Endothelial cell of umbilical vein (primary cell): ENCODE measurements at regions of chr10 and their contacts with region 1.

Region 1: DNA sequence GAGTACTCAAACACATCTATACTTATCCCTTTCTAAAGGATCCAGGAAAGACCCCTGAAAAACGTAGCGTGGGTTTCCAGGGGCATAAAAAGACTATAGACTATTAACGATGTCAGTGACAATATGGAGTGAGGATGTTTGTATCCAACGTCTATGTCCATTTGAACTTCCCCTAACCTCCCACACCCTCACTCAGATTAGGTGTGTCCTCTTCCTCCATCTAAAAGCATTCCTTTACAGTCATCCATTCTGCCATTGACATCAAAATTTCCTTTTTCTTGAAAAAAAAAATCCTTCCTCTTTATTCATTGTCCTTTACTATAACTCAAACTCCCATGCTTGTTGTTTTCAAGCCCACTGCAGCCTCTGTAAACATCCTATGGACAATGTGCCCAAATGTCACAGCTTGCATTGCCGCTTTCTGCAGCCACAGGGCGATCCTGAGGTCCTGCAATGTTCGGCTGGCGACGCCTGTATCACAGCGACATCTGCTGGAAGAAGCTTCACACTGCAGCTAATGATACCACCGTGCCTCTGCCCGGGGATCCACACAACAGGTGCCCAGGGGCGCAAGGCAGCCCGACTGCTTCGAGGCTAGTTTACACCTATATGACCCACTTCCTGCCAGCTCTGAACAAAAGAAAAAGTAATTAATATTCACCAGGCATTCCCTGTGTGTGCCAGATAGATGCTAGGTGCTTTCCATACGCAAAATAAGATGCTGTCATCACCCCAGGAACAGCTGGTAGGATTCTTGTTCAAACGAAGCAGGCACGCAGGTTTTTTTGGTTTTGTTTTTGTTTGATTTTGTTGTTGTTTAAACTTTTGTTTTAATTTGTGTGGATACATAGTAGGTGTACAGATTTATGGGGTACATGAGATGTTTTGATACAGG is 267.9 kb upstream of the GHITM start:
- DNase-seq: peak; percentile 69
- H3K4me3 ChIP-seq: no peak overlapping the region
- H3K27ac ChIP-seq: no peak overlapping the region
- H3K4me1 ChIP-seq: no peaks in the 10 kb centered on the region
- H3K27me3 ChIP-seq: no peaks in the 10 kb centered on the region
- CTCF ChIP-seq: peak; percentile 86 to 92
- POLR2A ChIP-seq: no peak

Region 2: DNA sequence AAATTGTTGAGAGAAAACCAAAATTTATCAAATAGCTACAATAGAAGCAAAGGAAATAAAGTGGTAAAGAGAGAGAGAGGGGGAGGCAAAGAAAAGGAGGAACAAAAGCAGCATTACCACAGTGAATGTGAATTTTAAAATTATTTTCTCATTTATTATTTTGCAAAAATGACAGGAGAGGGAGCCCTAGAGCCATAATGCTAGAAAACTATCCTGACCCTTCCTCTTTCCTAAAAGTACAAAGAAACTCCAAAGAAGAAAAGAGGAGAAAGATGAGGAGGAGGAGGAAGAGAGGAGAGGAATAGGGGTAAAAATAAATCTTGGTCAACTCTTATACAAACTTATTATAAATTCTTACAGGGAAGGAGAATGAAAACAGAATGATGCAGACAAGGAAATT is 1074.9 kb before region 1 on chr10:
- CTCF ChIA-PET with region 1: interaction called, 114 read pairs
- POLR2A ChIA-PET with region 1: no interaction called
- dilution Hi-C with region 1: no loop called
- intact Hi-C with region 1: loop called (anchors 1 kb)
- DNase-seq: peak; percentile 6
- H3K4me3 ChIP-seq: no peak overlapping the region
- H3K27ac ChIP-seq: no peak overlapping the region
- H3K4me1 ChIP-seq: no peaks in the 10 kb centered on the region
- H3K27me3 ChIP-seq: no peaks in the 10 kb centered on the region
- CTCF ChIP-seq: peak in 1 of 2 donors; percentile 18
- POLR2A ChIP-seq: no peak

Region 3: DNA sequence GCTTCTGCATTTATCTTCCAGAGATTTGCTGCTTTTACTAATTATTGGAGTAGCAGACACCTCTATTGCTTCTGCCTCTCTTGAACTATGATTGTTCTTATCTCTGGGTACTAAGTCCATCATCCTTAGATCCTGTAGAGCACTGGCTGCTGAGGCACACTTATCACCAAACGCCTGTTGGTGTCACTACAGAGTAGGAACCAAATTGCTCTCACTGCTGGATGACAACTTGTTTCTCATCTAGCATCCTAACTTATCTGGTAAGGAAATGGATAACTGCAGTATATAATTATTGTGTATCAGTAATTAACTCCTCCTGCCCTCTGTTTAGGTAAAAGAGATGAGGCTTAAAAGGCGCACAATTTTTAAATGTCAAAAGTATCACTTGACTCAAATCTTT is 937.0 kb before region 1 on chr10:
- CTCF ChIA-PET with region 1: interaction called, 9 read pairs
- POLR2A ChIA-PET with region 1: no interaction called
- dilution Hi-C with region 1: no loop called
- intact Hi-C with region 1: loop called (anchors 1 kb)
- DNase-seq: peak; percentile 19
- H3K4me3 ChIP-seq: no peak overlapping the region
- H3K27ac ChIP-seq: no peak overlapping the region
- H3K4me1 ChIP-seq: no peaks in the 10 kb centered on the region
- H3K27me3 ChIP-seq: no peaks in the 10 kb centered on the region
- CTCF ChIP-seq: peak; percentile 5 to 24
- POLR2A ChIP-seq: no peak

Region 4: DNA sequence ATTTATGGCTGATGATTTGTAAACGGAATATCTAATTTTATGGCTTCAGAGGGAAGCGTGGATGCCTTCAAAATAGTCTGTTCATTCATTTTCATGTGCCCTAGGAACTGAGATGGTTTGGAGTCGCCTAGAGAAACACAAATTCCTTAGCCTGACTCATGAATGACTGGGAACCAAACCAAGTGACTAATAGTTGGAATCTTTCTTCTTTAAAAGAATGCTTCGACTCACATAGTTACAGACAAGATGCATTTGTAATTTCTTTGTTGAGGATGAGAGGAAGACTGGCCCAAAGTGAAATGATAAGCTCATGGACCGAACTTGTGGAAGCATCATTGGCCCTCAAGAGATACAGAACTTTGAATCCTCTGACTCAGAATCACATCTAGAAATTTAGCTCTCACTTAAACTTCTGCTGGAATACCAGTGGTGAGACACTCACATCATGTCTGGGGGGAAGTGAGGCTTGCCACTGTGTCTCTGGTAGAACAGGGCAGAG is 889.3 kb before region 1 on chr10:
- CTCF ChIA-PET with region 1: interaction called, 10 read pairs
- POLR2A ChIA-PET with region 1: no interaction called
- dilution Hi-C with region 1: no loop called
- intact Hi-C with region 1: loop called (anchors 2 kb)
- DNase-seq: peak; percentile 88
- H3K4me3 ChIP-seq: no peak overlapping the region
- H3K27ac ChIP-seq: peak overlapping the region; percentile 83
- H3K4me1 ChIP-seq: peaks cover 16% of the 10 kb centered on the region
- H3K27me3 ChIP-seq: no peaks in the 10 kb centered on the region
- CTCF ChIP-seq: no peak
- POLR2A ChIP-seq: no peak

Region 5: DNA sequence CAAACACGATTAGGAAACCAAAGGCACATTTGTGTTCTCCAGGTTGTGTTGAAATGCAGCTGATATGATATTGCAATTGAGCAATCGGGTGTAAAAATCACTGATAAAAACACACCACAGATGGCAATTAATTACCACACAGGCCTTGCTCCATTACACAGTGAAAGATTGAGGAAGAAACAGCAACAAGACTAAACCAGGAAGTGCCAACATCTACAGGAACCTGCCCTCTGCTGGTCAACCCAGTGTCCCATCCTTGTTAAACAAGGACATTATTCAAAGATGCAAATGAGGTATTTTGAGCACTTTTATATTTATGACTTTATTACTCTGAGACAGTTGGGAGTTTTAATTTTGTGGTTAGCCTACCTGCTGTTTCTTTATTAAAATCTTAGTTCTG is 497.8 kb before region 1 on chr10:
- CTCF ChIA-PET with region 1: interaction called, 8 read pairs
- POLR2A ChIA-PET with region 1: no interaction called
- dilution Hi-C with region 1: no loop called
- intact Hi-C with region 1: loop called (anchors 1 kb)
- DNase-seq: peak; percentile 40
- H3K4me3 ChIP-seq: no peak overlapping the region
- H3K27ac ChIP-seq: no peak overlapping the region
- H3K4me1 ChIP-seq: no peaks in the 10 kb centered on the region
- H3K27me3 ChIP-seq: no peaks in the 10 kb centered on the region
- CTCF ChIP-seq: peak; percentile 32 to 50
- POLR2A ChIP-seq: no peak

Region 6: DNA sequence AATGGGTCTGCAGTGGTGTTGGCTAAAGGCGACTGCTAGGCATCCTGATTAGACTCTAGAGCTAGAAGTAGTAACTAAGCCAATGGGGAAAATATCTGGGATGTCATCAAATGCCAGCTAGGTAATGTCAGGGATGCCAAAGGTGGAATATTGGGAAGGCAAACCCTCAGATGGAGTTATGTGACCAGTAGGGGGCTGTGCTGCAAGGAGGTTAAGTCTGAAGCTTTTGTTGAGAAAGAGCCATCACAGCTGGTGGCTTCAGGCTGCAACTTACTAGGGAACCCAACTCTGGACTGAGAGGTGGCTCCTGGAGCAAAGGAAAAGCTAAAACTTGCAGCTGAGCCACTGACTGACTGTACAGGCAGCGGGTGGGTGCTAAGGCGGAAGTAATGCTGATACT is 309.1 kb before region 1 on chr10:
- CTCF ChIA-PET with region 1: interaction called, 48 read pairs
- POLR2A ChIA-PET with region 1: no interaction called
- dilution Hi-C with region 1: no loop called
- intact Hi-C with region 1: loop called (anchors 10 kb)
- DNase-seq: no peak
- H3K4me3 ChIP-seq: no peak overlapping the region
- H3K27ac ChIP-seq: no peak overlapping the region
- H3K4me1 ChIP-seq: no peaks in the 10 kb centered on the region
- H3K27me3 ChIP-seq: no peaks in the 10 kb centered on the region
- CTCF ChIP-seq: peak in 1 of 2 donors; percentile 9
- POLR2A ChIP-seq: no peak